MCF 10A (cell line): ENCODE measurements at regions of chr17 and their contacts with region 1.

Region 1: DNA sequence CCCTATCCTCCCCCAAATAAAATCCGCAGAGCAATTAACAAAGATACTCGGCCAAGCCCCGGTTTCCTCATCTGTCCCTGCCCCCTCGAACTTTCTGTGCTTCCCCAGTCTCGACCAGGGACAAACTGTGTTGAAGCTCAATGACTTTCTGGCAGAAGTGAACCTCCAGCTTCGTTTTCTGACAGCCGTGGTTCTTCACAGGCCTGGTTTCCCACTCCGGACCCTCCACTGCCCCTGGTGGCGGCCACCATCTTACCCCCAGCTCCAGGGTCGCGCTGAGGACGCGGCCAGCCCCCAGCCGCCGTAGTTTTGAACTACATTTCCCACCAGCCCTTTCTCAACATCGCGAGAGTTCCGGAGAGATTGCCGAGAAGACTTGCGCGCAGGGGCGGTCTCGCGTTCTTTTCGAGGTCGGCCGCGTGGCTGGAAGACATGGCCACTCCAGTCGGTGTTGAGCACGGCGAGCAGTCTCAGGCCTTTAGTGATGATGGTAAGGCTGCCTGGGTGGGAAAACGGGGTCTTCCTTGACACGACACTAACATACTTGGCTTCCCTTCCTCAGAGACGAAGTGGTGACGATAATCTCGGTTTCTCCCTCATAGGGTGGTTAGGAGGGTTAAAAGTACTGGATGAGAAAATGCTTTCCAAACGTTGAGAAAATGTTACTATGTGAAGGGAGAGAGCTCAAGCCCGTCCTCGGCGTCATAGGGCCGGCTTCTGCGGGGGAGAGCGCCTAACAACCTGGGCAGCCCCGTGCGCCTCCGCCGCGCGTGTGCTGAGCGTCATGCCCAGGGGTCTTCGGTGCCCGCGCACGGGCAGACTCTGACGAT is 17.7 kb downstream of the PRCD start:
- DNase-seq: peak; percentile 96
- H3K4me3 Mint-ChIP-seq: peak overlapping the region; percentile 92
- H3K27ac Mint-ChIP-seq: peak overlapping the region; percentile 97
- H3K4me1 Mint-ChIP-seq: peaks cover 19% of the 10 kb centered on the region
- H3K27me3 Mint-ChIP-seq: no peaks in the 10 kb centered on the region
- CTCF ChIP-seq: no peak

Region 2: DNA sequence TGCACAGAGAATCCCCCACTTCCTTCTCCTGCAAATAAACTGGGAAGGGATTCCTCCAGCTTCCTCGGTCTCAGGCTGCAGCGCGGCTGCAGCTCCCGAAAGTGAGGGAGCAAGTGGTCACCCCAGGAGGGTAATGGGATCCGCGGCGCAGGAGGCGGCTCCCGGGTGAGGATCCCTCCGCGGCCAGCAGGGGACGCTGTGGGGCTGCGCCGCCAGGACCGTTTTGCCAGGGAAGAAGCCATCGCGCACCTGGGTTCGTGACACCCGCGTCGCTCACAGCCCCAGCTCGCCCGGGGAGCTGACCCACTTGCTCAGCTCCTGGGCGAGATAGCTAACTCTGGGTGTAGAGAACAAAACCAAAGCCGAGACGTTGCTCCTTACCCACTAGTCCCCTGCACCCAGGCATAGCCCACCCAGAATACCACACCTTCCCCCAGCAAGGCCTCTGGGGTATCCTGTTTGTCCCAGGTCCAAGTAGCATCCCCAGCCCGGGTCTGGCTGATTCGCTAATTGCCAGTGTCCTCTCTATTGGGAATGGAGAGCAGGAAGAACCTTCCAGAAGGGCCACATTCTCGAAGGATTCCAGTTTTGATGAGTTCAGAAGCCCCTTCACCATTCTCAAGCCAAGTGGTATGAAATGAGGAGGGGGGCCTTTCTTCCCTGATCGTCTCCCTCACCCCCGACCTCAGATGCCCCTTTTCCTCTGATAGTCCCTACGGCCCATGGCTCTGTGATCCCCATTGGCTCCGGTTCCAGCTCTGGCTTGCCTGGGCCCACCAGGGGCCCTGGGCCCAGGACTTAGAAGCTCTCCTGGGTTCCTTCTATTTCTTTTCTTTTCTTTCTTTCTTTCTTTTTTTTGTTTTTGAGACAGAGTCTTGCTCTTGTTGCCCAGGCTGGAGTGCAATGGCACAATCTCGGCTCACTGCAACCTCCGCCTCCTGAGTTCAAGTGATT is 34.2 kb before region 1 on chr17:
- CTCF ChIA-PET with region 1: interaction called, 33 read pairs
- POLR2A ChIA-PET with region 1: interaction called, 55 read pairs
- intact Hi-C with region 1: no loop called
- DNase-seq: peak; percentile 67
- H3K4me3 Mint-ChIP-seq: no peak overlapping the region
- H3K27ac Mint-ChIP-seq: no peak overlapping the region
- H3K4me1 Mint-ChIP-seq: peaks cover 11% of the 10 kb centered on the region
- H3K27me3 Mint-ChIP-seq: peaks cover 25% of the 10 kb centered on the region
- CTCF ChIP-seq: peak; percentile 99

Region 3: DNA sequence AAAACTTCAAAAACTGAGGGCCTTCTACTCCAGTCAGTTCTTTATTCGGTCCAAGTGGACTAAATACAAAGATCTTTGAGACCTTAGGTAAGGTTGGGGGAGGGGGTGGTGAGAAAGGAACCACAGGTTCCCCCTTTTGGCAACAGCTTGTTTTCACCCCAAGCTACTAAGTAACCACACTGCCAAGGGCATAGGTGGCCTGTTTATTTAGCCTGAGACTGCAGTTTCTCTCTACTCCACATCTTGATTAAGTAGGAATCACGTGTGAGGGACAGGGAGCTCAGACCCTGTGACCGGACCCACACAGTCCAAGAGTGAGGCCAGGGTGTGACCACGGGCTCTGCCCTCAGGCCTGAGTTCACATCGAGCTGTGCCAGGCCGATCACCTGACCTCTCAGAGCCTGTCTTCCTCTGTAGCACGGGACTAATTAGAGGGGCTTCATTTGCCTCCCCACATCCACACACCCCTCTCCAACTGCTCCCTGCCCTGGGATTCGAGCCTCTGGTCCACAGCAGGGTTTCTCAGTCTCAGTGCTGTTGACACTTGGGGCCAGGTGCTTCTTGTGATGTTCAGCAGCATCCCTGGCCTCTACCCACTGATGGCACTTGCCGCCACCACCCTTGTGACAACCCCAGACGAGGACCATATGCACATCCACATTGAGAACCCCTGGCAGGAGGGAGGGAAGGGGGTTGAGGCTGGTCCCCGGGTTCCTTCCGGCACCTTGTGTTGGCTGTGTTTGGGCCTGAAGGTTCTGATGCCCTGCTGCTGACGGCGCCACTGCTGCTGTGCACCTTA is 10.2 kb after region 1 on chr17:
- CTCF ChIA-PET with region 1: interaction called, 5 read pairs
- POLR2A ChIA-PET with region 1: interaction called, 47 read pairs
- intact Hi-C with region 1: no loop called
- DNase-seq: peak; percentile 35
- H3K4me3 Mint-ChIP-seq: no peak overlapping the region
- H3K27ac Mint-ChIP-seq: peak overlapping the region; percentile 50
- H3K4me1 Mint-ChIP-seq: peaks cover 27% of the 10 kb centered on the region
- H3K27me3 Mint-ChIP-seq: no peaks in the 10 kb centered on the region
- CTCF ChIP-seq: no peak

Region 4: GRCh38 chr17:76597728-76598474 is 40.3 kb after region 1 on chr17:
- CTCF ChIA-PET with region 1: interaction called, 7 read pairs
- POLR2A ChIA-PET with region 1: interaction called, 33 read pairs
- intact Hi-C with region 1: no loop called
- DNase-seq: no peak
- H3K4me3 Mint-ChIP-seq: no peak overlapping the region
- H3K27ac Mint-ChIP-seq: peak overlapping the region; percentile 16
- H3K4me1 Mint-ChIP-seq: peaks cover 20% of the 10 kb centered on the region
- H3K27me3 Mint-ChIP-seq: no peaks in the 10 kb centered on the region
- CTCF ChIP-seq: no peak

Region 5: GRCh38 chr17:76714822-76715495 is 157.4 kb after region 1 on chr17:
- CTCF ChIA-PET with region 1: interaction called, 7 read pairs
- POLR2A ChIA-PET with region 1: interaction called, 8 read pairs
- intact Hi-C with region 1: loop called (anchors 10 kb)
- DNase-seq: peak; percentile 67
- H3K4me3 Mint-ChIP-seq: no peak overlapping the region
- H3K27ac Mint-ChIP-seq: peak overlapping the region; percentile 55
- H3K4me1 Mint-ChIP-seq: peaks cover 13% of the 10 kb centered on the region
- H3K27me3 Mint-ChIP-seq: no peaks in the 10 kb centered on the region
- CTCF ChIP-seq: peak; percentile 74